IMR-90 (cell line): ENCODE measurements at regions of chr19 and their contacts with region 1.

Region 1: DNA sequence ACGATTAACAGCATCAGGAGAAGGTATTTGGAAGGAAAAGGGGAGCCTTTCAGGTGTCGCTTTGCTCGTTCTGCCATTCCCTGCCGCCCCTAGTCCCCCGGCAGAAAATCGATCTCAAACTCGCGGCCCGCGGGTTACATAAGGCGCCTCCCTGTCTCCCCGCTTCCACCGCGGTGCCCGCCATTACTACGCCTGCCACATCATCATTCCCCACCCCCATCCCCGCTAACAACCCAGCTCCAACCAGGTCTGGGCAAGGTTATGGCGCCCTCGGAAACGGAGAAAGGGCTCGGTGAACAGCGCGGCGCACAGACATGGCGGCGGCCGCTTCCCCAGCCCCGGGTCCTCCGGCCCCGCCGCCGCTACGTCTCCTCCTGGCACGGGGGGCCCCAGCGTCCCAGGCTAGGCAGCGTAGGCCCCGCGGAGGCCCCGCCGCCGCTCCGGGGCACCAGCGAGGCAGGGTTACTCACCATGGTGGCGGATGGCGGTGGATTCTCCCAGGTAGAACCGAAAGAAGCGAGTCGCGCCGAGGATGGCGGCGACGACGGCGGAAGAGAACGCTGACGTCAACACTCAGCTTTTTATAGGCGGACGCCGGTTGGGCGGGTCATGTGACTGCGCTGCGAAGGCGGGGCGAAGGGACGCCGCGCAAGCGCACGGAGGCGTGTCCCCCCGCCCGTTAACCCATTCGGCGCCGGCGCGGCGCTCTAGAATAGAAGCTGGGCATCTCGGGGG is at the start of gene EEF2:
- DNase-seq: peak; percentile 87
- ATAC-seq: peak; percentile 46
- H3K4me3 ChIP-seq: peak within 1 kb of the TSS; percentile 79
- H3K27ac ChIP-seq: peak within 1 kb of the TSS; percentile 93
- H3K4me1 ChIP-seq: peaks cover 13% of the 10 kb centered on the region
- H3K27me3 ChIP-seq: no peaks in the 10 kb centered on the region
- CTCF ChIP-seq: no peak
- POLR2A ChIP-seq: peak; percentile 100
- RAD21 ChIP-seq: no peak
- total RNA-seq, gene EEF2: 1,727 and 2,161 TPM in 2 replicates

Region 2: DNA sequence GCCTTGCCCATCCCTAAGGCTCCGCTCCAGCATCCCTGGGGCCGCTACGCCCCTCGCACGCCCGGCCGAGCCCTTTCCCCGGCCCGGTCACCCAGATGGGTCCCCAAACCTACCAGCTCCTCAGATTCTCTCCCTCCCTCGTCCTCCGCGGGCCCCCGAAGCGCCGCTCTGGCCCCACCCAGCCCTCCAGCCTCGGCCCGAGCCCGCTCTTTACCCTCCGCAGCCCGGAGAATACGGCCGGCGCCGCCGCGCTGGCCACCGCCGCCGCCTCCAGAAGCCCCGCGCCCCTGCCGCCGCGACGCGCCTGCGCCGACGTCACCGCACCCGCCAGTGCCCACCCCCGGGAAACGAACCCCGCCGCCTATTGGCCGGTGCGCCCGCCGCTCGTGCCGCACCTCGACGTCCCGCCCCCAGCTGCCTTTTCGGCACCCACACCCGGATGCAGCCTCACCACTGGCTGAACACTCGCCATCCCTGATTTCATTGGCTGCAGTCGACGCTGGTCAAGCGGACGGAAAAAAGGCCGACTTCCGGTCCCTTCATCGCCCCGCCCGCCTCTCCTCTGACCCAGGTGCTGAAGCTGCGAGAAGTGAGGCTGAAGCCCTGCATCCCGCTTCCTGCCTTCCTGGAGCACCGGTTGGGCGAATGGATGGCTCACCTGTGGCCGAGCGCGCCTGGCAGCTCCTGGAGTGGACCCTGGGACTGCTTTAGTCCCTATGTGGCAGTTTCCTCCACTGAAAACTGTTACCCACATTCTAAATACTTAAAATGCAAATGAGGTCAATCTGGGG is 14.1 kb before region 1 on chr19 and contains the start of gene DAPK3:
- CTCF ChIA-PET with region 1: interaction called, 8 read pairs
- POLR2A ChIA-PET with region 1: interaction called, 10 read pairs
- dilution Hi-C with region 1: no loop called
- in situ Hi-C with region 1: no loop called
- intact Hi-C with region 1: no loop called
- DNase-seq: peak; percentile 97
- ATAC-seq: peak; percentile 77
- H3K4me3 ChIP-seq: peak within 1 kb of the TSS; percentile 81
- H3K27ac ChIP-seq: peak within 1 kb of the TSS; percentile 99
- H3K4me1 ChIP-seq: peaks cover 9% of the 10 kb centered on the region
- H3K27me3 ChIP-seq: no peaks in the 10 kb centered on the region
- CTCF ChIP-seq: no peak
- POLR2A ChIP-seq: peak; percentile 91
- RAD21 ChIP-seq: no peak
- total RNA-seq, gene DAPK3: 128 and 145 TPM in 2 replicates

Region 3: GRCh38 chr19:4007021-4007835 is 22.2 kb after region 1 on chr19 and contains the start of gene PIAS4:
- CTCF ChIA-PET with region 1: interaction called, 5 read pairs
- POLR2A ChIA-PET with region 1: interaction called, 5 read pairs
- dilution Hi-C with region 1: no loop called
- in situ Hi-C with region 1: no loop called
- intact Hi-C with region 1: loop called (anchors 2 kb)
- DNase-seq: peak; percentile 90
- ATAC-seq: peak; percentile 94
- H3K4me3 ChIP-seq: peak within 1 kb of the TSS; percentile 100
- H3K27ac ChIP-seq: peak within 1 kb of the TSS; percentile 85
- H3K4me1 ChIP-seq: peaks cover 24% of the 10 kb centered on the region
- H3K27me3 ChIP-seq: no peaks in the 10 kb centered on the region
- CTCF ChIP-seq: 0 out of 2 replicates have a peak, but pooled peaks have one; percentile 5
- POLR2A ChIP-seq: peak; percentile 52; the same call in 1 of the 2 replicates
- RAD21 ChIP-seq: no peak
- total RNA-seq, gene PIAS4: 10.8 and 13.6 TPM in 2 replicates

Region 4: DNA sequence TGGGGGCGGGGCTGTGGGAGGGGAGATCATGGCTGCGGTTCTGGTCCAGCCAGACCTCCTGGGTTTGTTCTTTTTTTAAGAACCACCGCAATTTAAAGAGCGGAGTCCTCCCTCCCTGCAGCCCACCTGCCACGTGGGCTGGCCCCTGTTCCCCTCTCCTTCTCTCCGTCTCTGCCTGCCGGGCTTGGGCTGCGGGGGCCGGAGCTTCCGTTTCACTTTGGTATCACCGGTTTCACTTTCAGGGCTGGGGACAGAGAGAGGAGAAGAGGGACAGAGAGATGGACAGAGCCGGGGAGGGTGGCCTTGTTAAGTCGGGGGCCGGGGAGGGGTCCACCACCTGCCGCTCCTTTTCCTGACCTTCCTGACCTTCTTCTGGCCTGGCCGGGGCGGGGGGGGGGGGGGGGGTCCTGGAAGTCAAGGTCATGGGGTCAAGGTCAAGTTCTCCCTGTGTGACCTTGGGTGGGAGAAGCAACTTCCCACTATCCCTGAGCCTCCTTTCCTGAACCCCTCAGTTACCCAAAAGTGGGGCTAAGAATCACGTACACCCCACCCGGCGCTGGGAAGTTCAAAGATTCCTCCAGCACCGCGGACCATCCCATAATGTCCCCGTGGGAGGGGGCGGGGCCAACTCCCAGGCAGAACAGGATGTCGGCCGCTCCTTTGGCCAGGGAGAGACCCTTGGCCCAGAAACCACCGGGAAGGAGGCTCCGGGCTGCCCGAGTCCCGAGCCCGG is 93.0 kb after region 1 on chr19:
- CTCF ChIA-PET with region 1: no interaction called
- POLR2A ChIA-PET with region 1: no interaction called
- dilution Hi-C with region 1: no loop called
- in situ Hi-C with region 1: no loop called
- intact Hi-C with region 1: no loop called
- DNase-seq: no peak
- ATAC-seq: peak; percentile 77
- H3K4me3 ChIP-seq: peak overlapping the region; percentile 51
- H3K27ac ChIP-seq: 0 out of 2 replicates have a peak overlapping the region, but pooled peaks have one; percentile 15
- H3K4me1 ChIP-seq: peaks cover 6% of the 10 kb centered on the region
- H3K27me3 ChIP-seq: no peaks in the 10 kb centered on the region
- CTCF ChIP-seq: no peak
- POLR2A ChIP-seq: no peak
- RAD21 ChIP-seq: no peak

Region 5: GRCh38 chr19:4197625-4198466 is 212.8 kb after region 1 on chr19:
- CTCF ChIA-PET with region 1: interaction called, 11 read pairs
- POLR2A ChIA-PET with region 1: no interaction called
- dilution Hi-C with region 1: no loop called
- in situ Hi-C with region 1: no loop called
- intact Hi-C with region 1: no loop called
- DNase-seq: no peak
- ATAC-seq: no peak
- H3K4me3 ChIP-seq: no peak overlapping the region
- H3K27ac ChIP-seq: no peak overlapping the region
- H3K4me1 ChIP-seq: no peaks in the 10 kb centered on the region
- H3K27me3 ChIP-seq: peaks cover 62% of the 10 kb centered on the region
- CTCF ChIP-seq: no peak
- POLR2A ChIP-seq: no peak
- RAD21 ChIP-seq: no peak